RWPE1 (cell line): ENCODE measurements at regions of chr20 and their contacts with region 1.

Region 1: GRCh38 chr20:32779500-32780211 is 17.5 kb downstream of the DNMT3B start:
- DNase-seq: no peak
- H3K27ac ChIP-seq: no peak overlapping the region
- CTCF ChIP-seq: no peak

Region 2: DNA sequence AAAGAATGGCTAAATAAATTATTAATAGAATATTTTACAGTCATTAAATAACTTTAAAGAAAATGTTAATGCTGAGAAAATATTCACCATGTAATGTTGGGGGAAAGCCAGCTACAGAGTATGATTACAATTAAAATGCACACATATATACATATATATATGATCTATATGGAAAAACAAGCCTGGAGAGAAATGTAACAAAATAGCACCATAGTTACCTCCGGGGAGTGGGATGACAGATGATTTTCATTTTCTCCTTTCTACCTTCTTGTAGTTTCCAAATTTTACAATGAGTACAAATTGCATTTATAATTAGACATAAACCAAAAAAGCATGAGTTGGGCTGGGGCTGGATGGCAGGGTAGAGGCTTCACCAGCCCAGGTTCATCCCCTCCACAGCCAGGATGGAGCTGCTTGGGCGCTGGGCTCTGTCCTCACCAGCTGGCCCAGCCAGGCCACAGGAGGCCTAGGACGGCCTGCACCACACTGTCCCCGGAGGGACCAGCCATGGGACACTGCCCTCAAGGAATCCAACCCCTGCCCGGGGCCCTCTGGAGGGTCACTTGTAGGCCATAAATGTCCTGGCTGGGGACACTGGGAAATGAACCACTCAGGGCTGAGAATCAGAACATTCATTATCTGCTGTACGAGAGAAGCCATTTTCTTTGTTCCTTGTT is 116.2 kb before region 1 on chr20:
- CTCF ChIA-PET with region 1: interaction called, 25 read pairs
- POLR2A ChIA-PET with region 1: no interaction called
- DNase-seq: no peak
- H3K27ac ChIP-seq: no peak overlapping the region
- CTCF ChIP-seq: no peak

Region 3: DNA sequence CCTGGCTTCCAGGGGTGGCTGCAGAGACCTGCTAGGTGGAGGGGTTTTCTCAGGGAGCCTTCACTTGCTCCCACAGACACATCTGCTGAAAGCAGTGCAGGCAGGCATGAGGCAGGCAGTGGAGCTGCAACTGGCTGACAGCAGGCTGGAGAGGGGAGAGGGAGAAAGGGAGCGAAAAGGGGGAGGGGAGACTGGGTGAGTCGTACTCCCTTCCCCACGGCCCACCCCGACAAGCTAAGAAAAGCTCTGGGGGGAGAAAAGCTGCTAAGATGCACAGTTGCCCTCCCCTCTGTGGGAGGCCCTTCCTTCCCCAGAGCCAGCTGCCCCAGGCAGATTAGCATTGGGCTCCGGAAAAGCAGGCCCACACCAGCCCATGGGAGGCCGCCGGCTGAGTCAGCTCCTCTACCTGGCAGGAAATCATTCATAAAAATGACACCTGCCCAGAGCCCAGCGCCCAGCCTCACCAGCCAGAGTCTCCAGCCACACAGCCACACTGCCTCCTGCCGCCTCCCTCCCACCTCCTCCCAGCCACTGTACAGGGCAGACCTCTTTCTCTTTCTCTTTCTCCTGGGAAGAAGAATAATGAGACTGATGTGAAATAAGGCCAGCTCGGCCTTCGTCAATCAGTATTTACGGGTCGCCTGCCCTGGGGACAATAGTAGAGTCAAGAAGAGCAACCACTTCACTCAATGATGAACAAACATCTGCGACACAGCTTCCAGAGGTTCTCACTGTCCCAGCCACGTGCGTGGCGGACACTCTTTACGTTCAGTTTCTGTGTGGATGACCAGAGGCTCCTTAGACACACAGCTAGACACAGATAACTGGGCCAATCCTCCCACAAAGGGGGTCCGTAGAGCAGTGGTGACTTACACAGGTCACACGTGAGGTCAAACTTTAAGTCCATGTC is 98.2 kb before region 1 on chr20:
- CTCF ChIA-PET with region 1: interaction called, 152 read pairs
- POLR2A ChIA-PET with region 1: no interaction called
- DNase-seq: peak; percentile 85
- H3K27ac ChIP-seq: peak overlapping the region; percentile 67
- CTCF ChIP-seq: no peak

Region 4: GRCh38 chr20:32756156-32756555 is 23.5 kb before region 1 on chr20:
- CTCF ChIA-PET with region 1: interaction called, 12 read pairs
- POLR2A ChIA-PET with region 1: no interaction called
- DNase-seq: no peak
- H3K27ac ChIP-seq: no peak overlapping the region
- CTCF ChIP-seq: no peak

Region 5: GRCh38 chr20:32767418-32768198 is 12.0 kb before region 1 on chr20:
- CTCF ChIA-PET with region 1: interaction called, 29 read pairs
- POLR2A ChIA-PET with region 1: interaction called, 3 read pairs
- DNase-seq: no peak
- H3K27ac ChIP-seq: no peak overlapping the region
- CTCF ChIP-seq: no peak

Region 6: DNA sequence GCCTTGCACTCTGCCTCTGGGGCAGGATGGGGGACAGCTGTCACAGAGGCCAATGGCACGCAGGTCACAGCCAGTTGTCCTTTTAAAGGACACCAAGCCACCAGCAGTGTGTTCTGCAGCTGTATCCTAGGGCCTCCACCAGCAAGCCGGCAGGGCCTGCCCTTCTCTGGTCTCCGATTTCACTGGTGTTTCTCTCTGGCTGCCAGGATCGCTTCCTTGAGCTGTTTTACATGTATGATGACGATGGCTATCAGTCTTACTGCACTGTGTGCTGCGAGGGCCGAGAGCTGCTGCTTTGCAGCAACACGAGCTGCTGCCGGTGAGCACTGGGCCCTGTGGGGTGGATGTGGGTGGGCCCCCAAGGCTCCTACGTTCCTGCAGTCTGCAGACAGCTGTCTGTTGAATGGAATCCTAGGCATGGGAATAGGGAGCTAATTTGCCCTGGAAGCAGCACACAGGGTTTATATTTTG is 17.4 kb after region 1 on chr20:
- CTCF ChIA-PET with region 1: interaction called, 10 read pairs
- POLR2A ChIA-PET with region 1: no interaction called
- DNase-seq: no peak
- H3K27ac ChIP-seq: no peak overlapping the region
- CTCF ChIP-seq: no peak

Region 7: GRCh38 chr20:33042430-33042829 is 262.8 kb after region 1 on chr20:
- CTCF ChIA-PET with region 1: no interaction called
- POLR2A ChIA-PET with region 1: no interaction called
- DNase-seq: no peak
- H3K27ac ChIP-seq: no peak overlapping the region
- CTCF ChIP-seq: no peak